Ovary (tissue), 10 donors: ENCODE measurements at regions of chr7 and their contacts with region 1.

Region 1: DNA sequence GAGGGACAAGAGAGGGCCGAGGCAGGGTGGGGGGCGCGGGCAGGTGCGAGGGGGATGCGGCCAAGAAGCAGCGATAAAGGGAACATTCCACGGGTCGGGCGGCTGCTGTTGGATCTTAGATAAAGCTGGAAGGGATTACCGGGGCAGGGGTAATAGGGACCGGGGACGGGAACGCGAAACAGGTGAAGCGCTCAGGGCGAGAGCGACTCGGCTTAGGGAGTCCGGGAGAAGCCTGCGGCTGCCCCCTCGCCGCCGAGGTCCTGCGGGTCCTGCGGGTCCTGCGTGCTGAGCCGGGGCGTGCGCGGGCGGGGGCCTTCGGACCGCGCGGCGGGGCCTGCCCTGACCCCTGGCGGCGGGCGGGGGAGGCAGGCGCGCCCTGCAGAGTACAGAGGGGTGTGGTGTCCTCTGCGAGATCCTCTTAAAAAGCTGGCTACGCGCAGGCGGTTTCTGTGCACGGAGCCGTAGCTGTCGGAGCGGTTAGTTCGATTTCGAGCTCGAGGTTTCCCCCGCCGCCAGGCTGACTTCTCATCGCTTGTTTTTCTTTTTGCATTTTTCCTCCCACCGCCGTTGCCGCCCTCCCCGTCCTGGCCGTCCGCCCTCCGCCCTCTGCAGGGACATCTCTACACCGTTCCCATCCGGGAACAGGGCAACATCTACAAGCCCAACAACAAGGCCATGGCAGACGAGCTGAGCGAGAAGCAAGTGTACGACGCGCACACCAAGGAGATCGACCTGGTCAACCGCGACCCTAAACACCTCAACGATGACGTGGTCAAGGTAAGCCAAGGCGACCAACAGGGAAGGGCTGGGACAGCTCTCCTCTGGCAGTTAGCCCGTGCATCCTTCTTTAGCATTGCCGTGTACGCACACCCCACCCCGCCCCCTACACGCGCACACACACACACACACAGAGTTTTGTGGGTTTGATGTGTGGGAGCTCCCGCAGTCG is 1.4 kb downstream of the CAV1 start:
- DNase-seq: peak; percentile 78 to 89 (median 82)
- H3K4me3 ChIP-seq: peak overlapping the region; percentile 80
- H3K27ac ChIP-seq: peak overlapping the region; percentile 54 to 73
- H3K4me1 ChIP-seq: peaks cover 9% of the 10 kb centered on the region
- H3K27me3 ChIP-seq: no peaks in the 10 kb centered on the region
- CTCF ChIP-seq: peak; percentile 57 to 83 (median 77)
- EP300 ChIP-seq: no peak
- POLR2A ChIP-seq: no peak

Region 2: GRCh38 chr7:116258734-116259133 is 267.5 kb before region 1 on chr7:
- intact Hi-C with region 1: loop called in 1 of 4 experiments (anchors 5 kb)
- DNase-seq: peak in 2 of 5 donors; percentile 19 to 44
- H3K4me3 ChIP-seq: no peak overlapping the region
- H3K27ac ChIP-seq: no peak overlapping the region
- H3K4me1 ChIP-seq: no peaks in the 10 kb centered on the region
- H3K27me3 ChIP-seq: no peaks in the 10 kb centered on the region
- CTCF ChIP-seq: peak; percentile 76 to 96 (median 93)
- EP300 ChIP-seq: no peak
- POLR2A ChIP-seq: no peak

Region 3: GRCh38 chr7:116271963-116272839 is 254.0 kb before region 1 on chr7:
- intact Hi-C with region 1: loop called in 2 of 4 experiments (anchors 5 to 10 kb)
- DNase-seq: peak in 4 of 5 donors; percentile 23 to 44 (median 26)
- H3K4me3 ChIP-seq: no peak overlapping the region
- H3K27ac ChIP-seq: no peak overlapping the region
- H3K4me1 ChIP-seq: peaks cover 9% of the 10 kb centered on the region
- H3K27me3 ChIP-seq: no peaks in the 10 kb centered on the region
- CTCF ChIP-seq: no peak
- EP300 ChIP-seq: no peak
- POLR2A ChIP-seq: no peak

Region 4: DNA sequence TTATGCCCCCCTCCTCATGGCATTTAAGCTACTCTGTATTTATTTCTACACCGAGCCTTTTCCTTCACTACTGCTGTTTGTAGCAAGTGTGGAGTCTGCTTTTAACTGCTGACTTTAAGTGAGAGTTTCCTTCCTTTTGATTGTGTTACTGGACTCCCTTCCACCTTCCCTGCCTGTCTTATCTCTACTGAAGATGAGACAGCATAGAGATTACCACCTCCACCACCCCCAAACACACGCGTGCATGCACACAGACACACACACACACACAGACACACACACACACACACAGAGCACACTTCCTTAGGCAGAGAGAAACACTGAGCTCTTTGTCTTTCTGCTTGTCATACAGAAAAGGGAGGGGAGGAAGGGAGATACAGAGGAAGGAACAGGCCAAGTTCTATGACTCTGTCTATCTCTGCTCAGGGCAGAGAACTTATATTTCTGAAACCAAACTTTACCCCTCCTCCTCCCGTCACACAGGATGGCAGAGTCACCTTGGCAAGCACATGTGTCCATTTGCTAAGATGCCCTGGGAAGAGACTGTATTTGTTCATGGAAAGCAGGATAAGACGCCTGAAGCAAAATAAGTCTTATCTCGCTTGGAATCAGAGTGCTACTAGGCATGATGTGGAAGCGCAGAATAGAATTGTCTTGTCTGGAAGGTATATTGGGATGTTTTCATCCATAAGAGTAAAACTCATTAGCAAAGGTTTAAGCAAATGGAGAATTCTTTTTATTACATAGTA is 108.4 kb before region 1 on chr7:
- intact Hi-C with region 1: no loop called
- DNase-seq: no peak
- H3K4me3 ChIP-seq: no peak overlapping the region
- H3K27ac ChIP-seq: no peak overlapping the region
- H3K4me1 ChIP-seq: no peaks in the 10 kb centered on the region
- H3K27me3 ChIP-seq: no peaks in the 10 kb centered on the region
- CTCF ChIP-seq: no peak
- EP300 ChIP-seq: no peak
- POLR2A ChIP-seq: no peak

Region 5: DNA sequence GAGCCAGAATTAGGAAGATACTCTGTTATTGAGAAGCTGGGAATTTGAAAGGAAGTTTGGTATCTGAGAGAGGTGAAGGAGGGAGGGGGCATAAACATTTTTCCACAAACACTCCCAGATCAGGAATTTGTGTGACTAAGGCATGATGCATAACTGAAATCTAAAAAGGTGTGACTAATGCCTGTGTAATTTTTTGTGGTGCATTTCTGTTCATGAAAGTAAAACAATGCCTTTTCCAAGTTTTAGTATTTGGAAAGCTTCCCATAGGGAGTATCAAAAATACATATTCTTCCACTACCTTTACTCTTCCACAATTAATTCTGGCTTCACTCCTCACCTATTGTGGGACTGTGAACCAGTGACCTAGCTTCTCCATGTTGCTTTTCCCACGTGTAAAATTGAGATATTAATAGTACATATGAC is 83.1 kb before region 1 on chr7:
- intact Hi-C with region 1: loop called in 2 of 4 experiments (anchors 10 kb)
- DNase-seq: no peak
- H3K4me3 ChIP-seq: no peak overlapping the region
- H3K27ac ChIP-seq: no peak overlapping the region
- H3K4me1 ChIP-seq: peaks cover 2% of the 10 kb centered on the region
- H3K27me3 ChIP-seq: no peaks in the 10 kb centered on the region
- CTCF ChIP-seq: no peak
- EP300 ChIP-seq: no peak
- POLR2A ChIP-seq: no peak

Region 6: GRCh38 chr7:116582806-116583444 is 56.7 kb after region 1 on chr7:
- intact Hi-C with region 1: loop called in 1 of 4 experiments (anchors 5 kb)
- DNase-seq: peak in 1 of 5 donors; percentile 27
- H3K4me3 ChIP-seq: no peak overlapping the region
- H3K27ac ChIP-seq: no peak overlapping the region
- H3K4me1 ChIP-seq: peaks cover 2% of the 10 kb centered on the region
- H3K27me3 ChIP-seq: no peaks in the 10 kb centered on the region
- CTCF ChIP-seq: no peak
- EP300 ChIP-seq: no peak
- POLR2A ChIP-seq: no peak